Common myeloid progenitor, CD34-positive (primary cell): ENCODE measurements at regions of chr12 and their contacts with region 1.

Region 1: GRCh38 chr12:3186546-3187215 is 109.5 kb downstream of the TSPAN9 start:
- DNase-seq: no peak
- H3K4me3 ChIP-seq: no peak overlapping the region
- H3K27ac ChIP-seq: no peak overlapping the region
- H3K4me1 ChIP-seq: peaks cover 0 to 23% (median 11%) of the 10 kb centered on the region in 4 experiments
- H3K27me3 ChIP-seq: peaks cover 0 to 26% (median 5%) of the 10 kb centered on the region in 5 experiments

Region 2: DNA sequence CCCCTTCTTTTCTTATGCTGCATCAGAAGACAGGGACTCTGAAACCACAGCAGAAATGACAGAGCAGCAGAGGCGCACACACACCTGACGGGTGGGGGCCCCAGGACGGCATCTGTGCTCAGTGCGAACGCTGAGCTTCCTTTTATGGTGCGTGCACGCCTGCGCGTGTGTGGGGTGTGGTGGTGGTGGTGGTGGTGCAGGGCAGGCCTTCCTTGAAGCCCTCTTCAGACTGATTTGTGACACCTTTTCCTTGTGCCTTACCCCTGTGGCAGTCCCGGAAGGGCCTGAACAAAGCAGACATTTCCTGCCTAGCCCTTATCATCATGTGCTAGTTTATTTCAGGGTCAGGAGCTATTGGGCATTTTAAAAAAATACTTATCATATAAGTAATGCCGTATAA is 33.8 kb before region 1 on chr12:
- CTCF ChIA-PET with region 1: interaction called, 10 read pairs
- POLR2A ChIA-PET with region 1: no interaction called
- DNase-seq: peak in 2 of 3 donors; percentile 56 to 64
- H3K4me3 ChIP-seq: no peak overlapping the region
- H3K27ac ChIP-seq: no peak overlapping the region
- H3K4me1 ChIP-seq: peaks cover 0 to 4% (median 2%) of the 10 kb centered on the region in 4 experiments
- H3K27me3 ChIP-seq: peaks cover 0 to 52% (median 12%) of the 10 kb centered on the region in 5 experiments